Caco-2 (cell line): ENCODE measurements at regions of chr6 and their contacts with region 1.

Region 1: GRCh38 chr6:27518881-27519795 is 46.2 kb upstream of the ZNF184 start:
- DNase-seq: peak; percentile 58 to 77
- H3K4me3 ChIP-seq: peak overlapping the region; percentile 81
- H3K4me3 Mint-ChIP-seq: peak overlapping the region; percentile 85
- H3K27ac Mint-ChIP-seq: peak overlapping the region; percentile 94
- H3K4me1 ChIP-seq: no peaks in the 10 kb centered on the region
- H3K4me1 Mint-ChIP-seq: no peaks in the 10 kb centered on the region
- H3K27me3 ChIP-seq: no peaks in the 10 kb centered on the region
- H3K27me3 Mint-ChIP-seq: no peaks in the 10 kb centered on the region
- CTCF ChIP-seq: peak; percentile 62 to 71

Region 2: DNA sequence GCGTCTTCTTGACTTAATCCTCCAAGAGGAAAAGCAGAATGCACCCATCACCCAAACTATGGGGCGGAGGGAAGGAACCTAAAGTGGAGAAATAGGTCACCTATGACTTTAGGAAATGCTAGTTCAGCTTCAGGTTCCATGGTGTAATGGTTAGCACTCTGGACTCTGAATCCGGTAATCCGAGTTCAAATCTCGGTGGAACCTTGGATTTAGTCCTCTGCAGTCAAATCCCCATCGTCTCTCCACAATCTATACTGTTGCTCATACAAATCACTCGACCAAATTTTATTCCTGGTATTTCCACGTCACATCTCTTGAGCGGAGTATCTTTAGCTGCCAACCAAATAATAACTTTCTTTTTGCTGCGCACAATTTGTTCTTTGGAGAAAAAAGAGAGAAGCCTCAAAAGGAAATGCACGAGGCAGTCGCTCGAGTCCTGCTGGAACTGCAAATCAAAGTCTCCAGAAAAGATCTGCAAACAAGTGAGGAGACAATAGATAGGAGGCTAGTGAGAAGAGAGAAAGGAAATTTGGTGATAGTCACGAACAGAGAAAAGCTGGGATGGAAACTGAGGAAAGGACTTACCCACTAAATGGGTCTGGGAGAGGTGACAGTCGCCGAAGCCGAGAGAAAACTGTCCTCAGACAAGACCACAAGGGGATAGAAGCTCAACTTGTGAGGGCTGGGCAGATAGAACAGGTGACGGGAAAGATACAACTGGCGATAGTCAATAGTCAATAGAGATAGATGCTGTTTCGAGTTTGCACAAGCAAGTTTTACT is 223.6 kb before region 1 on chr6:
- CTCF ChIA-PET with region 1: interaction called, 3 read pairs
- POLR2A ChIA-PET with region 1: no interaction called
- intact Hi-C with region 1: loop called (anchors 2 kb)
- DNase-seq: peak; percentile 59 to 71
- H3K4me3 ChIP-seq: peak overlapping the region; percentile 41
- H3K4me3 Mint-ChIP-seq: peak overlapping the region; percentile 97
- H3K27ac Mint-ChIP-seq: peak overlapping the region; percentile 77
- H3K4me1 ChIP-seq: 0 out of 2 replicates have a peak, but pooled peaks cover 5% of the 10 kb centered on the region
- H3K4me1 Mint-ChIP-seq: peaks cover 16% of the 10 kb centered on the region
- H3K27me3 ChIP-seq: no peaks in the 10 kb centered on the region
- H3K27me3 Mint-ChIP-seq: peaks cover 7% of the 10 kb centered on the region
- CTCF ChIP-seq: no peak

Region 3: GRCh38 chr6:27452496-27452897 is 66.6 kb before region 1 on chr6:
- CTCF ChIA-PET with region 1: no interaction called
- POLR2A ChIA-PET with region 1: no interaction called
- intact Hi-C with region 1: no loop called
- DNase-seq: no peak
- H3K4me3 ChIP-seq: no peak overlapping the region
- H3K4me3 Mint-ChIP-seq: no peak overlapping the region
- H3K27ac Mint-ChIP-seq: no peak overlapping the region
- H3K4me1 ChIP-seq: no peaks in the 10 kb centered on the region
- H3K4me1 Mint-ChIP-seq: peaks cover 6% of the 10 kb centered on the region
- H3K27me3 ChIP-seq: no peaks in the 10 kb centered on the region
- H3K27me3 Mint-ChIP-seq: no peaks in the 10 kb centered on the region
- CTCF ChIP-seq: no peak

Region 4: GRCh38 chr6:27568226-27568897 is 49.2 kb after region 1 on chr6:
- CTCF ChIA-PET with region 1: no interaction called
- POLR2A ChIA-PET with region 1: no interaction called
- intact Hi-C with region 1: loop called (anchors 1 kb)
- DNase-seq: peak; percentile 80 to 82
- H3K4me3 ChIP-seq: peak overlapping the region; percentile 15; the same call in 1 of the 2 replicates
- H3K4me3 Mint-ChIP-seq: peak overlapping the region; percentile 59
- H3K27ac Mint-ChIP-seq: peak overlapping the region; percentile 89
- H3K4me1 ChIP-seq: peaks cover 33% of the 10 kb centered on the region
- H3K4me1 Mint-ChIP-seq: no peaks in the 10 kb centered on the region
- H3K27me3 ChIP-seq: no peaks in the 10 kb centered on the region
- H3K27me3 Mint-ChIP-seq: no peaks in the 10 kb centered on the region
- CTCF ChIP-seq: no peak

Region 5: DNA sequence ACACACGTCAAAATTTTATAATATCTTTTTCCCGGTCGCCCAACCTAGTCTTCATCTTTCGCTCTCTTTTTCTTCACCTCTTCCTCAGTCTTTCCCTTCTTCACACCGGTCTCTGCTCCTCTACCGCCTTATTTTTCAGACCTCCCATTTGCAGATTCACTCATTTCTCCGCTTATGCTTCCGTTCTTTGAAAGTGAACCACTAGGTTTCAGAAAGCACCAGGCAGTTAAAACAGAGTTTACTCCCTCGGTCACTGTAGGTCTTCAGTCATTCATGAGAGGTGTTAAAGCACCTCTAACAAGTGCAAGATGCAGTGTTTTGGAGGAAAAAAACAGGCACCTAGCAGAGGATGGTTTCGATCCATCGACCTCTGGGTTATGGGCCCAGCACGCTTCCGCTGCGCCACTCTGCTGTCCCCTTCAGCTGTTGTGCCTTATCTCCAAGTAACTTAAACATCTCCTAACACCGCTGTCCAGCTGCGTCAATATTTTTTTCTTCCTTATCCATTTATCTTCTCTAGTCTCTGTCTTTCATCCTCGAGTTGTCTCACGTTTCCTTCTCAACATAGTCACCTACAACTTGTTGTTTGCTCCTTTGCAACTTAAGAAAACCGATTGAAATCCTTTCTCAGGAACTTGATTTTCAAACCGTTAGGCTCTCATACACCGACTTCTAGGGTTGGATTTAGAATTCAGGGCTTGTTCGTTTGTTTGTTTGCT is 73.5 kb after region 1 on chr6:
- CTCF ChIA-PET with region 1: interaction called, 3 read pairs
- POLR2A ChIA-PET with region 1: no interaction called
- intact Hi-C with region 1: loop called (anchors 1 kb)
- DNase-seq: peak; percentile 67 to 82
- H3K4me3 ChIP-seq: peak overlapping the region; percentile 53
- H3K4me3 Mint-ChIP-seq: no peak overlapping the region
- H3K27ac Mint-ChIP-seq: no peak overlapping the region
- H3K4me1 ChIP-seq: no peaks in the 10 kb centered on the region
- H3K4me1 Mint-ChIP-seq: no peaks in the 10 kb centered on the region
- H3K27me3 ChIP-seq: no peaks in the 10 kb centered on the region
- H3K27me3 Mint-ChIP-seq: no peaks in the 10 kb centered on the region
- CTCF ChIP-seq: no peak

Region 6: DNA sequence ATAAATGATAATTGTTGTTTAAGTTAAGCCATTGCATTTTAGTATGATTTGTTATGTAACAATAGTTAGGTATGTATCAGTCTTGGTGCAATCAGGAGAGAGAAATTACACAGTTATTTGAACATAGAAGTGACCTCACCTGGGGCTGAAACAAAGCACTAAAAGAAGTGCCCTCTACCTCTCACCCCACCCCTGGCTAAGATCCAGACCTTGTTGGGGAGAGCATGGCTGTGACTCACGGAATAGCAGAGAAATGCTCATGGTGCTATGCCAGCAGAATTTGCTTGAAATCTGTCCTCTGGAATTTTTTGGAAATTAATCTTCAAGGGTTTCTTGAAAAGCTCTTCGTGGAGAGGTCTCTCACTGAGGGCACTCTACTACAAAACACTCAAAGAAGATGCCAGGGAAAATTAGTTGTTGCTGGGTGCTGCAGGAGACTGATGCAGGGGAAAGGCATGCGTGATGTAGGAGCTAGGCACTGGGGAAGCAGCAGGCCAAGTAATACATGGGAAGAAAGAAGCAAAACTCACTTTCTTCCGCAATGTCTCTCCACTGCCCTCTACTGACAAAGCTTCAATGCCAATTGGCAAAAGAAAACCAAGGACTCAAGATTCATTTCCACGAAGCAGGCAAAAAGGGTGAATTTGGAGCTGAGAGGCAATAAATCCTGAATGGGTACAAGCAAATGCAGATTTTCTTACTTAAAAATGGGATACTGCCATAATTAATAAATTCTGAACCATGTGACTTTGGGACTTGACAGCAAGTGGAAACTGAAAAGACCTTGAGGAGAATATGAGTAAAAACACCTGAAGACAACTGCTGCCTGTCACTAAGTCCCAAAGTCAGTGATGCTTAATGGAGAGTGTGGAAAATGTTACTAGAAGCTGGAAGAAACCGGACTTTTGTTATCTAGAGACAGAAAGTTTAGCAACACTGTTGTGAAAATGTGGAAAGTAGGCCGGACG is 90.1 kb after region 1 on chr6:
- CTCF ChIA-PET with region 1: interaction called, 35 read pairs
- POLR2A ChIA-PET with region 1: no interaction called
- intact Hi-C with region 1: loop called (anchors 1 kb)
- DNase-seq: peak in 1 of 2 experiments; percentile 69
- H3K4me3 ChIP-seq: no peak overlapping the region
- H3K4me3 Mint-ChIP-seq: no peak overlapping the region
- H3K27ac Mint-ChIP-seq: no peak overlapping the region
- H3K4me1 ChIP-seq: no peaks in the 10 kb centered on the region
- H3K4me1 Mint-ChIP-seq: peaks cover 9% of the 10 kb centered on the region
- H3K27me3 ChIP-seq: no peaks in the 10 kb centered on the region
- H3K27me3 Mint-ChIP-seq: peaks cover 2% of the 10 kb centered on the region
- CTCF ChIP-seq: peak; percentile 61 to 79

Region 7: DNA sequence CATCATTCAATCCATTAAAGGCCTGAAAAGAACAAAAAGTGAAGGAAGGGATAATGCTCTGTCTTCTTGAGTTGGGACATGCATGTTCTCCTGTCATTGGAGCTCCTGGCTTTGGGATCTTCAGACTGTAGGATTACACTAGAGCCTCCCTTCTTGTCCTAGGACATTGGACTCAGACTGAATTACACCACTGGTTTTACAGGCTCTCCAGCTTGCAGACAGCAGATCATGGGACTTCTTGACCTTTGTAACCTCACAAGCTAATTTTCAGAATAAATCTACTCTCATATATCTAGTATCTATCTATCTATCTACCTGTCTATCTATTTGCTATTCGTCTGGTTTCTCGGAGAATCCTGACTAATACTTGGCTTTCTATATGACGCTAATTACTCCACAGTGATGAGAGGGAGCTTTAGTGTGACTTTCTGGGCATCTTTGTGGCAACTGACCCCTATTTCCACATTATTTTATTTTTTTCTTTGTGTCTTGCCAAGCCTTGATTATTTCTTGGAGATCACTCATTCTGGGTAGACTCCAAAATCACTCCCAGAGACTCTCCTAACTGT is 105.6 kb after region 1 on chr6:
- CTCF ChIA-PET with region 1: no interaction called
- POLR2A ChIA-PET with region 1: no interaction called
- intact Hi-C with region 1: no loop called
- DNase-seq: peak in 1 of 2 experiments; percentile 15
- H3K4me3 ChIP-seq: no peak overlapping the region
- H3K4me3 Mint-ChIP-seq: no peak overlapping the region
- H3K27ac Mint-ChIP-seq: no peak overlapping the region
- H3K4me1 ChIP-seq: peaks cover 21% of the 10 kb centered on the region
- H3K4me1 Mint-ChIP-seq: peaks cover 14% of the 10 kb centered on the region
- H3K27me3 ChIP-seq: no peaks in the 10 kb centered on the region
- H3K27me3 Mint-ChIP-seq: peaks cover 3% of the 10 kb centered on the region
- CTCF ChIP-seq: no peak

Region 8: GRCh38 chr6:27795697-27796494 is 276.8 kb after region 1 on chr6:
- CTCF ChIA-PET with region 1: interaction called, 12 read pairs
- POLR2A ChIA-PET with region 1: no interaction called
- intact Hi-C with region 1: no loop called
- DNase-seq: peak; percentile 56 to 88
- H3K4me3 ChIP-seq: no peak overlapping the region
- H3K4me3 Mint-ChIP-seq: peak overlapping the region; percentile 52
- H3K27ac Mint-ChIP-seq: peak overlapping the region; percentile 77
- H3K4me1 ChIP-seq: peaks cover 22% of the 10 kb centered on the region
- H3K4me1 Mint-ChIP-seq: peaks cover 16% of the 10 kb centered on the region
- H3K27me3 ChIP-seq: no peaks in the 10 kb centered on the region
- H3K27me3 Mint-ChIP-seq: peaks cover 3% of the 10 kb centered on the region
- CTCF ChIP-seq: peak; percentile 60 to 79